Mammary epithelial cell (primary cell): ENCODE measurements at regions of chr11 and their contacts with region 1.

Region 1: GRCh38 chr11:111422494-111423249 is 43.6 kb upstream of the POU2AF1 start:
- DNase-seq: no peak
- H3K4me3 ChIP-seq: no peak overlapping the region
- H3K27ac ChIP-seq: no peak overlapping the region
- H3K4me1 ChIP-seq: peaks cover 14% of the 10 kb centered on the region
- H3K27me3 ChIP-seq: no peaks in the 10 kb centered on the region
- CTCF ChIP-seq: peak; percentile 61 to 84

Region 2: GRCh38 chr11:111283945-111284481 is 138.7 kb before region 1 on chr11:
- CTCF ChIA-PET with region 1: interaction called, 7 read pairs
- dilution Hi-C with region 1: loop called (anchors 25 kb)
- in situ Hi-C with region 1: no loop called
- intact Hi-C with region 1: loop called (anchors 1 kb)
- DNase-seq: no peak
- H3K4me3 ChIP-seq: no peak overlapping the region
- H3K27ac ChIP-seq: no peak overlapping the region
- H3K4me1 ChIP-seq: no peaks in the 10 kb centered on the region
- H3K27me3 ChIP-seq: peaks cover 6% of the 10 kb centered on the region
- CTCF ChIP-seq: no peak

Region 3: GRCh38 chr11:111299101-111300026 is 123.3 kb before region 1 on chr11:
- CTCF ChIA-PET with region 1: no interaction called
- dilution Hi-C with region 1: loop called (anchors 25 kb)
- in situ Hi-C with region 1: no loop called
- intact Hi-C with region 1: loop called (anchors 1 kb)
- DNase-seq: peak; percentile 17
- H3K4me3 ChIP-seq: peak overlapping the region; percentile 35 to 68 (median 55)
- H3K27ac ChIP-seq: no peak overlapping the region
- H3K4me1 ChIP-seq: peaks cover 7% of the 10 kb centered on the region
- H3K27me3 ChIP-seq: peaks cover 3% of the 10 kb centered on the region
- CTCF ChIP-seq: peak in 1 of 2 donors; percentile 59

Region 4: GRCh38 chr11:113082341-113082955 is 1659.8 kb after region 1 on chr11:
- CTCF ChIA-PET with region 1: no interaction called
- dilution Hi-C with region 1: no loop called
- in situ Hi-C with region 1: no loop called
- intact Hi-C with region 1: no loop called
- DNase-seq: no peak
- H3K4me3 ChIP-seq: no peak overlapping the region
- H3K27ac ChIP-seq: no peak overlapping the region
- H3K4me1 ChIP-seq: no peaks in the 10 kb centered on the region
- H3K27me3 ChIP-seq: peaks cover 2% of the 10 kb centered on the region
- CTCF ChIP-seq: no peak